Aorta (tissue), 5 donors: ENCODE measurements at regions of chr5 and their contacts with region 1.

Region 1: DNA sequence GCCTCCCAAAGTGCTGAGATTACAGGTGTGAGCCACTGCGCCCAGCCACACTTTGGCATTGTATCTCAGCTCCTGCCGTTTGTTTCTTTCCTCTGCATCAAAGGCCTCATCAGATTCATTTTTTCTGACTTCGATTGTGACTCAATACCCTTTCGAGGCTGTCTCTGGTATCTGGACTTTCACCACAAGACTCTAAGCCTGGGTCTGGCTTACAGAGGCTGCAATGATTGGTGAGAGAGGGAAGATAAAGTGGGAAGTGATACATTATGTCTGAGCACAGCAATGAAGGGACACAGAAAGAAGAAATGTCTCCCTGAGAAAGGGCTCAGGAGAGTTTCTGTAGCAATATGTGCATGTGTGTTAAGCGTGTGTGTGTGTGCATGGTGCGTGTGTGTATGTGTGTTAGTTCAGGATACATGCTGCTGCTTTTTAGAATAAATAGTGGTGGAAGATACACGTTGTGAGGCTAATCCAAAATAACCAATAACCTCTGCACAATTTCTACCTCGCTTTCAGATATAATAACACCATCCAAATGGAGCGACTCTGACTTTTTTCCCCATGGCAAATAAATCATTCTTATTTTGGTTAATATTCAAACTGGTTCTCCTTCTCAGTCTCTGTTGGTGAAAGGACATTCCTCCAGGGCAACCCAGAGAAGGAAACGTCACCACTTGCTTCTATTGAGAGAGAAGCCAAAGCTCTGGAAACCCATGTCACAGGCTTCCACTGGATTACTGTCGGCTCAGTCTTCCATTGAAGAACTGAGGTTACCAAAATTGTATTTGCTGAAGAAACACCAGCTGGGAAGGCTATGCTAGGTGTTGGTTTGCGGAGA is 8.1 kb upstream of the DAB2 start:
- DNase-seq: no peak
- ATAC-seq: no peak
- H3K4me3 ChIP-seq: no peak overlapping the region
- H3K27ac ChIP-seq: no peak overlapping the region
- H3K4me1 ChIP-seq: no peaks in the 10 kb centered on the region
- H3K27me3 ChIP-seq: no peaks in the 10 kb centered on the region

Region 2: DNA sequence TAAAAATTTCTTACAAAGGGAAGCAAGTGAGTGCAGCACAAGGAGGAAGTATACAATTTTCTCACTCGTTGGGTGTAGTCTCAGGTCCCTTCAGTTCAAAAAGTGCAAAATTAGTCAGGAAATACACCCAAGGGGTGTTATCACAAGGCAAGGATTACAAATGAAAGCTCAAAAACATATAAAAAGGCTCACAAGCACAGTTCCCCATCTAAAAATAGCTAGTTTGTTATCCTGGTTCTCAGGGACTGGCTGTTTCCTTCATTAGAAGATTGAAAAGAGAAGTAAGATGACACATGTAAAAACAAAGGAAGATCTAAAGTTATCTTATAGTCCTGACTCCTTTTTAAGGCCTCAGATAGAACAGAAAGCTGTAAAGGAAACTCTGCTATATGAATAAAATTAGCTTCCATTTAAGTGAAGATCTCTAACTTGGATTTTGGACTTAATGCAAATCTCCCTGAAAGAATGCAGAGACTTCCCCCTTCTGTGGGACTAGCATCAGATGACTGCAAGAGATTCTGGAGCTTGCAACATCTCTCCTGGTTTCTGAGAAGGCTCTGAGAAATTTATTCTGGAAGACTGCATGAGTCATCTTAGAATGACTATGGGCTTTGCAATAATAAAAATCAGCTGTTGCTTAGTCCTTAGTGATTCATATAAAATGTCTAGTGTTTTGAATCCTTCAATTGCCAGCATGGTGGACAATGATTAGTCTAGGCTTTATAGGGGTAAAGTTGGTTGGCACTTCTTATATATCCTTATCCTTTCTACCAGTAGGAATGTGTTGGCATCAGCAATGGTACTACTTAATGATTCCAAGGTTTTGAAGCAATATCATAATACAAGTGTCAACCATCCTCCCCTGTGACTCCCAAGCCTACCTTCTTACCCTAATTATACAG is 33.5 kb before region 1 on chr5:
- intact Hi-C with region 1: loop called in 1 of 2 experiments (anchors 5 kb)
- DNase-seq: no peak
- ATAC-seq: peak; percentile 89
- H3K4me3 ChIP-seq: no peak overlapping the region
- H3K27ac ChIP-seq: peak overlapping the region; percentile 28 to 67
- H3K4me1 ChIP-seq: peaks cover 0 to 10% of the 10 kb centered on the region in 2 donors
- H3K27me3 ChIP-seq: no peaks in the 10 kb centered on the region